GM13976 (cell line): ENCODE measurements at regions of chr3 and their contacts with region 1.

Region 1: DNA sequence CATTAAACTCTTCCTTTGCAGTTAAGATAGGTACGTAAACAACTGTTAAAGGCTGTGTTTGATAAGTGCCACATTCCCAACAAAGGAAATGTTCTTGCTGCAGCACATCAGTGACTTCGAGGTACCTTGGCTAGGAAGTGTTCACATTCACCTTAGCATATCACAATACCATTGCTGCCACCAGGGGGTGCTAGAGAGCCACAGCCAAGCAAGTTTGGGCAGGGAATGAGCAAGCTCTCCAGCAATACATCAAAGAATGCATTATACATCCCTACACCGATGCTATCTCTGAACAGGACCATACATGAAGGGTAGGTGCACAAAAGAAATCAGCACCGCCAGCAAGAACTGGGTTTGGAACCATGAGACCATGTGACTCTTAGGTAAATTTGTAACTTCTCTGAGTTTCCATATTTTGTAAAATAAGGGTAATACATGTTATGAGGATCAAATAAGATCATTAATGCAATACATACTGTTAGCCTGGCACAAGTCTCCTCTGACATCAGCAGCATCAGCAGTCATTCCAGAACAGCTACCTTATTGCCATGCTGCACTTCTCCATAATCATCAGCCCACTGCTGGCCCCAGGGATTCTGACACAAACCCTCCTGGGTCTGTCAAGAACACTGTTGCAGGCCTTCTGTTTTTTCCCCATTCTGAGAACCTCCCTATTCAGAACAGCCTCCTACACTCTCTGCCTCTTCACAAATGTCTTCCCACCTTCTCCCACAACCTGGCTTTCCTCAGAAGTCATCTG is 37.6 kb downstream of the RYK start:
- DNase-seq: peak; percentile 64
- CTCF ChIP-seq: peak; percentile 90

Region 2: DNA sequence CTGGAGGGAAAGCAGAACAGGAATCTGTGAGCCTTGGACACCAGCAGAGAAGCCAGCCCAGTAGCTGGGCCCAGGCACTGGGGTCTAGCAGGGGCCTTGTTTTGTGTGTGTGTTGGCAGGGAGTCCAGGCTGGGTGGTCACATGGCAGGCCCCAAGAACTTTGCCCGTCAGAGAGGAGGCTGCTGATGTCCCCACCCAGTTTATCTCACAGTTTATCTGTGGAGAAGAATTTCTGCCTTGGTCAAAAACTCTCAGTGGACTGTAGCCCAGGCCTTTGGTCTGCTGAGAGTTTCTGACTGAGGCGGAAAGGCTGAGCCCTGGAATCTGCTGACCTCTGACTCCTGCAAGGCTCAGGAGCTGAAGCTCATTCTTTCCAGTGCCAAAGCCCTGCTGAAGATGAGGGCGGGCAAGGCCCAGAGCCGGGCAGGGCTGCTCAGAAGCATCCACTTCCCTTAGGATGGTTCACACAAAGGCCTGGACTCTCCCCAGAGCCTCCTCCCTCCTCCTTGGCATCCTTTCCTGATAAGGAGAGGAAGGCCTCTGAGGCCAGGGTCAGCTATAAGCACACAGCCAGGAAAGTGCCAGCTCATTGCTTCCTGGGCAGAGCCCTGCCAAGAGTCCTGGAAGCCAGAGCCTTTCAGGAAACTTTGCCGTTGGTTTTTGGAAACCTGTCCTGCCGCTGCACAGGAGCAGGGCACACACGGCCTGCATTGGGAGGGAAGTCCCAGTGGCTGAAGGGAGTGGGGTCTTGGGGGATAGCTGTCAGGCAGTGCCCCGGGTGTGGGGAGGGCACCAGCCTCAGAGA is 146.2 kb before region 1 on chr3:
- in situ Hi-C with region 1: no loop called
- DNase-seq: no peak
- CTCF ChIP-seq: no peak

Region 3: DNA sequence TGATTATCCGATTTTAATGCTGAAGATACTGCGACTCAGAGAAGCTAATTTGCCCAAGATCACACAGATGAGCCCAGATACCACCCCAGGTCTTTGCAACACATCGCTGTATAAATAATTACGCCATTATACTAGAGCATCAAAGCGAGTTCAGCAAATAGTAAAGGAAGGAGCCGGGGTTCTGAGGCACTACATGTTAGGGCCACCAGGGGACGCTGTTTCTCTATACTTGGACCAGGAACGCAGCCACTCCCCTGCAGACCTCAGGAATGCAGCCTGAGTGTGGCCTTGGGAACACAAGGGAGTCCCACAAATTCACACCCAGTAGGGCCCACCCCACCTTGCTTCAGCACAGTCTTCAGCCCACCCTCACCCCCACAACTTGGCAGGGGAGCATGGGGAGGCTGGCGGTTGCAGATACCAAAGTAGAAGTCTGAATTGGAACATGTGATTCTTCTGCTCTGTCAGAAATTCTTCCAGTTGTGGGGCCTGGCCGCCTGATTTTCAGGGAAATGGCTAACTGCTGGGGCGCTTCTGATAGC is 95.3 kb after region 1 on chr3:
- in situ Hi-C with region 1: loop called (anchors 10 kb)
- DNase-seq: peak; percentile 78
- CTCF ChIP-seq: peak; percentile 95

Region 4: GRCh38 chr3:134320749-134321148 is 107.7 kb after region 1 on chr3:
- in situ Hi-C with region 1: no loop called
- DNase-seq: no peak
- CTCF ChIP-seq: no peak

Region 5: DNA sequence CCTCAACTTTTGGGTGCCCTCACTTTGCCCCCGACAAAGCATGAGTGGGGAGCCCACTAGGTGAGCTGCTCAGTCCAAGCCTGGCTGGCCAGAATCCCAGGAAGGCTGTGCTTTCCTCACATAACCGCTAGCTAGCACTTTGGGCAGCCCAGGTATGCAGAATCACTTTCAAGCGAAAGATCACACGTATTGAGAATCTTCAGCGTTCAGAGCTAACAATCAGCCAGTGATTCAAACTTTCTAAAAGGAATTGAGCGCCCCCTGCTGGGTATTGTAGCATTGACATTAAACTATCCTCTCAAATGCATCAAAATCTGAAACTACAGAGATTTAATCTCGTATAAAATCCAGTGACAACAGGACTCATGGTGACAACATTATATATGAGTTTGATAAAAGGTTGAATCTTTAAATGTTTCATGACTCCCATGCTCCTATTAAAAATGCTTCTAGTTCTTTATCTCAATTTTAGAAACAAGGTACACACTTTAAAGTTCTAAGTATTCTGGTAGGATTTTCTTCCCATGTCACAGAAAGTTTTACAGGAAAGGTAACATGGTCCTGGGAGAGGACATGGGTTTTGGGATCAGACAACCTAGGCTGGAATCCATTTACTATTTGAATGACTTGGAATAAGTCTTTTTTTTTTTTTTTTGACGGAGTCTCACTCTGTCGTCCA is 260.9 kb after region 1 on chr3:
- in situ Hi-C with region 1: loop called (anchors 10 kb)
- DNase-seq: peak; percentile 53
- CTCF ChIP-seq: peak; percentile 53

Region 6: DNA sequence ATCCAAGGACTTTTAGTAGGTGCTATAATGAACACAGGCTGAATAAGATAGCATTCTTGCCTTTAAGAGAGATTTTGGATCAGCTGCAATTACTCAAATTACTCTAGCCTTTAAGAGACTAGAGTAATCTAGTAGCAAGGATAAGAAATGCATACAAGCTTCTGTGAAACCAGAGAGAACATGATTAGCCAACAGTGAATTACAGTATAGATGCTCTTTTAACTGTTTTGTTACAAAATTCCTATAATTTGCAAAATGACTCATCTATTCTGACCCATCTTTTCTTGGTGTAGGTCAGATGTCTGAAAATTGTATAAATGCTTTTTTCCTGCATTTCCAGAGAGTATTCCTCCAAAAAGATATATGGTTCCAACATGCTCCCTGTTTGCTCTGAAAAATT is 339.7 kb after region 1 on chr3:
- in situ Hi-C with region 1: no loop called
- DNase-seq: no peak
- CTCF ChIP-seq: no peak